Transverse colon (tissue), 4 donors: ENCODE measurements at regions of chr7 and their contacts with region 1.

Region 1: GRCh38 chr7:151782598-151783448 is 94.1 kb downstream of the PRKAG2 start:
- DNase-seq: peak; percentile 69
- H3K4me3 ChIP-seq: peak overlapping the region in 1 of 4 donors; percentile 22
- H3K27ac ChIP-seq: no peak overlapping the region
- H3K4me1 ChIP-seq: peaks cover 0 to 9% (median 8%) of the 10 kb centered on the region in 4 donors
- H3K27me3 ChIP-seq: no peaks in the 10 kb centered on the region
- CTCF ChIP-seq: peak; percentile 67 to 89 (median 80)
- EP300 ChIP-seq: no peak
- POLR2A ChIP-seq: no peak

Region 2: DNA sequence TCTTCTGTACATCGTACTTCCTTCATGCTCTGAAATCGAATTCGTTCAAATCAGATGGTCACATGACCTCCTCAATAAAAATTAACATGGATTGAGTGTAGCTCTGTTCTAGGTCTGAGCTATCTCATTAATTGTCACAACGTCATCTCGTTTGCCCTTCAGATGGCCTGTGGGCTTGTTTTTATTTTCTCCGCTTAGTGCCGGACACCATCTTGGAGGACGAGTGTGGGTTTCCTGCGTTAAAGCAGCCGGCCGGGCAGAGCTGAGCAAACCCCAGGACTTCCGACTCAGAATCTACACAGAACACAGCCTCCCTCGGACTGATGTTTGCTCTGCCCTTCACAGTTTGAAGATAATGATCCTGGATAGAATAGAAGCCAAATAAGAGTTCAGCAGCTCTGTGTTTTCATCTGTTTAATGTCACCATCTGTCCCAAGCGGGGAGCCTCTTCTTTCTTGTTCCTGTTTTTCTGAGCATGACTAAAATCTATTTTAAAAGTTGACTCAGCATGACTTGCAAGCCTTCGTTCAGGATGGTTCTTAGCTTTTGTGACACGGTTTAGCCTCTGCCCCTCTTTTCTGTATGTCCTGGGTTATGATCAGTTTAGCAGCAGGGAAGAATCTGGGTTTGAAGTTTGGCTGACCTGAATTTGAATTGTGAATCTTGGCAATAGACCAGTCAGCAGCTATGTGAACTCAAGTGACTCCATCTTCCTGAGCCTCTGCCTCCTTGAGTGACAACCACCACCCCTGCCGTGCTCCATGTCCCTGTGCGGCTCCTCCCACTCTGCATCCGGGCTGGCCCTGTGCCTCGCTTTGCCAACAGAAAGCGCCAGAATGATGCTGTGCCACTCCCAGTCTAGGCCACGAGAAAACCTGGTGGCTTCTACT is 142.9 kb after region 1 on chr7:
- in situ Hi-C with region 1: loop called in 3 of 4 experiments (anchors 10 to 25 kb)
- intact Hi-C with region 1: loop called (anchors 10 kb)
- DNase-seq: peak; percentile 86
- H3K4me3 ChIP-seq: no peak overlapping the region
- H3K27ac ChIP-seq: peak overlapping the region; percentile 65 to 85 (median 72)
- H3K4me1 ChIP-seq: peaks cover 10 to 52% (median 38%) of the 10 kb centered on the region in 4 donors
- H3K27me3 ChIP-seq: no peaks in the 10 kb centered on the region
- CTCF ChIP-seq: no peak
- EP300 ChIP-seq: no peak
- POLR2A ChIP-seq: peak; percentile 27

Region 3: GRCh38 chr7:151936207-151936606 is 153.4 kb after region 1 on chr7:
- in situ Hi-C with region 1: loop called in 3 of 4 experiments (anchors 10 to 25 kb)
- intact Hi-C with region 1: loop called (anchors 10 kb)
- DNase-seq: no peak
- H3K4me3 ChIP-seq: peak overlapping the region in 1 of 4 donors; percentile 5
- H3K27ac ChIP-seq: peak overlapping the region; percentile 6 to 44 (median 32)
- H3K4me1 ChIP-seq: peaks cover 0 to 23% (median 11%) of the 10 kb centered on the region in 4 donors
- H3K27me3 ChIP-seq: no peaks in the 10 kb centered on the region
- CTCF ChIP-seq: no peak
- EP300 ChIP-seq: no peak
- POLR2A ChIP-seq: no peak